A549 (cell line): ENCODE measurements at regions of chr19 and their contacts with region 1.

Region 1: GRCh38 chr19:39792999-39793546 is 14.4 kb downstream of the LEUTX start:
- DNase-seq: peak; percentile 88 to 99
- ATAC-seq: peak; percentile 97 to 99
- H3K4me3 ChIP-seq: peak overlapping the region; percentile 40
- H3K27ac ChIP-seq: 0 out of 6 replicates have a peak overlapping the region, but pooled peaks of 1 of the 2 experiments have one; percentile 37
- H3K4me1 ChIP-seq: no peaks in the 10 kb centered on the region
- CTCF ChIP-seq: peak; percentile 100
- EP300 ChIP-seq: no peak
- POLR2A ChIP-seq: no peak
- RAD21 ChIP-seq: peak; percentile 97 to 99

Region 2: GRCh38 chr19:39704181-39705044 is 88.7 kb before region 1 on chr19 and contains the start of gene LGALS14:
- CTCF ChIA-PET with region 1: no interaction called
- POLR2A ChIA-PET with region 1: no interaction called
- DNase-seq: no peak
- ATAC-seq: peak; percentile 26 to 46; a peak in 5 of 6 replicates
- H3K4me3 ChIP-seq: no peak within 1 kb of the TSS
- H3K27ac ChIP-seq: no peak within 1 kb of the TSS
- H3K4me1 ChIP-seq: no peaks in the 10 kb centered on the region
- CTCF ChIP-seq: no peak
- EP300 ChIP-seq: no peak
- POLR2A ChIP-seq: no peak
- RAD21 ChIP-seq: no peak
- polyA plus RNA-seq, gene LGALS14: not detected in 2 replicates

Region 3: DNA sequence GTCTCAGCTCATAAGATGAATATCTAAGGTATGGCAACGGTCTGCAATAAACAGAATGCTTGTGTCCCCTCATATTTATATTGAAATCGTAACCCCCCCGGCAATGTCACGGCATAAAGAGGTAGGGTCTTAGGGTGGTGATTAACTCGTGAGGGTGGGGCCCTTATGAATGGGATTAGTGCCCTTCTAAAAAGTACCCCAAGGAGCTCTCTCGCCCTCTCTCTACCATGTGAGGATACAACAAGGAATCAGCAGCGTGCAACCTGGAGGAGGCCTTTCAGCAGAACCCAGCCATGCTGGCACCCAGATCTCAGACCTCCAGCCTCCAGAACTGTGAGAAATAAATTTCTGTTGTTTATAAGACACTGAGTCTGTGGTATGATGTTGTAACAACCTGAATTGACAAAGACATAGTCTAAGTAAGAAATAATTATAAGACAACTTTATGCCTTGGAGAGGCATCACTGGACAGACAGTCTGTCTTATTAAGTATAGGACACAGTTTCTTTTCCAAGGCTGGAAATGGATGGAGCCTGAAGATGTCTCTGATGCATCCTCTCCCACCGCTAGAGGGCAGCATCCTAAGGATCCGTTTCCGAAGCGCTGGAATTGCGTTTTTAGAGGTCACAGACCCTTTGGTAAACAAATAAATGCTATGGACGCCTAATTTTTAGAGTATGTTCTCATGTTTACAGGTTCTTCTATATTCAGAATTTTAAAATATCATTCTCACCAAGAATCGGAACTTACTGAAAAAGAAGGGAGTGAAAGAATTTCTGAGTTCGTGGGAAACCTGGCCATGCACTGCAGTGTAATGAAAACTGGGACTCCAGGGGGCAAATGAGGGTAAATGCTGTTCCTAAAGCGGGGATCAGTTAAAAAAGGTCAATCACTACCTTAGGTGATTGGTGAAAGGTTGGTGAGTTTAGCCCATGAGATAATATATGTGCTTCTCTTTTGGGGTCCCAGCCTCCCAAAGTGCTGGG is 27.7 kb before region 1 on chr19:
- CTCF ChIA-PET with region 1: interaction called, 33 read pairs
- POLR2A ChIA-PET with region 1: no interaction called
- DNase-seq: peak; percentile 41 to 82
- ATAC-seq: peak; percentile 55 to 77; a peak in 3 of 6 replicates
- H3K4me3 ChIP-seq: no peak overlapping the region
- H3K27ac ChIP-seq: no peak overlapping the region
- H3K4me1 ChIP-seq: no peaks in the 10 kb centered on the region
- CTCF ChIP-seq: peak; percentile 94
- EP300 ChIP-seq: no peak
- POLR2A ChIP-seq: no peak
- RAD21 ChIP-seq: peak; percentile 39 to 63; a peak in 3 of 5 replicates

Region 4: GRCh38 chr19:39805104-39805503 is 12.0 kb after region 1 on chr19:
- CTCF ChIA-PET with region 1: interaction called, 84 read pairs
- POLR2A ChIA-PET with region 1: no interaction called
- DNase-seq: no peak
- ATAC-seq: no peak
- H3K4me3 ChIP-seq: no peak overlapping the region
- H3K27ac ChIP-seq: no peak overlapping the region
- H3K4me1 ChIP-seq: no peaks in the 10 kb centered on the region
- CTCF ChIP-seq: no peak
- EP300 ChIP-seq: no peak
- POLR2A ChIP-seq: no peak
- RAD21 ChIP-seq: no peak

Region 5: DNA sequence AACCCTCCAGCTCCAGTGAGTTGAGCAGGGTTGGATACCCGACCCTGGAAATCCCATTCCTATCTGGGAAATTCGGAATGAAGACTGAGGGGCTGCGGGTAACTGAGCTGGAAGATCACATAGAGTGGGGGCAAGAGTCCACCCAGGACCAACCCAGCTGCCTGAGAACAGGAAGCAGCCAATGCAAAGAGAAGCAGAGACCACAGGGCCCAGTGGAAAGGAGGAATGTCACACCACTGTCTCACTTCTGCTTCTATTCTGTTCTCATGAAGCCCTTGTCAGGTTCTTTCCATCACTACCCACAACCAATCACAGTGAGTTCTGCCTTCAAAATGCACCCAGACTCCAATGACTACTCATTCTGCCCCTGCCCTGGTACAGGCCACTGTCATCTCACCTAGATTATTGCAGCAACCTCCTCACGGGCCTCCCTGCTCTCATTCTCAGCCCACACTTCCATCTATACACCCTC is 25.6 kb after region 1 on chr19:
- CTCF ChIA-PET with region 1: interaction called, 23 read pairs
- POLR2A ChIA-PET with region 1: no interaction called
- DNase-seq: no peak
- ATAC-seq: no peak
- H3K4me3 ChIP-seq: no peak overlapping the region
- H3K27ac ChIP-seq: no peak overlapping the region
- H3K4me1 ChIP-seq: no peaks in the 10 kb centered on the region
- CTCF ChIP-seq: no peak
- EP300 ChIP-seq: no peak
- POLR2A ChIP-seq: no peak
- RAD21 ChIP-seq: no peak

Region 6: GRCh38 chr19:39833464-39834286 is 40.6 kb after region 1 on chr19 and contains the start of gene DYRK1B:
- CTCF ChIA-PET with region 1: interaction called, 25 read pairs
- POLR2A ChIA-PET with region 1: interaction called, 13 read pairs
- DNase-seq: peak; percentile 100
- ATAC-seq: peak; percentile 90 to 95
- H3K4me3 ChIP-seq: peak within 1 kb of the TSS; percentile 73
- H3K27ac ChIP-seq: peak within 1 kb of the TSS; percentile 81 to 87
- H3K4me1 ChIP-seq: peaks cover 17% of the 10 kb centered on the region
- CTCF ChIP-seq: no peak
- EP300 ChIP-seq: no peak; a peak in 1 of 5 replicates
- POLR2A ChIP-seq: peak; percentile 40
- RAD21 ChIP-seq: no peak
- polyA plus RNA-seq, gene DYRK1B: 13.8 and 17.3 TPM in 2 replicates